Natural killer cell (primary cell): ENCODE measurements at regions of chr19 and their contacts with region 1.

Region 1: GRCh38 chr19:58543826-58544590 is at the start of gene TRIM28:
- DNase-seq: peak; percentile 100
- ATAC-seq: peak; percentile 85 to 94 (median 86)
- H3K4me3 ChIP-seq: peak within 1 kb of the TSS; percentile 51
- H3K4me3 Mint-ChIP-seq: peak within 1 kb of the TSS; percentile 98
- H3K27ac ChIP-seq: peak within 1 kb of the TSS; percentile 93
- H3K27ac Mint-ChIP-seq: peak within 1 kb of the TSS; percentile 99
- H3K4me1 ChIP-seq: peaks cover 27% of the 10 kb centered on the region
- H3K4me1 Mint-ChIP-seq: peaks cover 31 to 34% of the 10 kb centered on the region in 2 donors
- H3K27me3 ChIP-seq: peaks cover 2% of the 10 kb centered on the region
- H3K27me3 Mint-ChIP-seq: peaks cover 6 to 12% of the 10 kb centered on the region in 2 donors
- CTCF ChIP-seq: no peak
- total RNA-seq, gene TRIM28: 330 to 451 (median 408) TPM

Region 2: GRCh38 chr19:58558623-58559274 is 14.7 kb after region 1 on chr19:
- intact Hi-C with region 1: loop called (anchors 1 kb)
- DNase-seq: peak; percentile 99 to 100
- ATAC-seq: peak; percentile 64 to 85 (median 68)
- H3K4me3 ChIP-seq: peak overlapping the region; percentile 95
- H3K4me3 Mint-ChIP-seq: peak overlapping the region; percentile 98
- H3K27ac ChIP-seq: peak overlapping the region; percentile 100
- H3K27ac Mint-ChIP-seq: peak overlapping the region; percentile 99
- H3K4me1 ChIP-seq: peaks cover 78% of the 10 kb centered on the region
- H3K4me1 Mint-ChIP-seq: peaks cover 46 to 91% of the 10 kb centered on the region in 2 donors
- H3K27me3 ChIP-seq: no peaks in the 10 kb centered on the region
- H3K27me3 Mint-ChIP-seq: no peaks in the 10 kb centered on the region
- CTCF ChIP-seq: no peak